ENCODE measurements at regions of chr9 and their contacts with region 1.

Region 1: DNA sequence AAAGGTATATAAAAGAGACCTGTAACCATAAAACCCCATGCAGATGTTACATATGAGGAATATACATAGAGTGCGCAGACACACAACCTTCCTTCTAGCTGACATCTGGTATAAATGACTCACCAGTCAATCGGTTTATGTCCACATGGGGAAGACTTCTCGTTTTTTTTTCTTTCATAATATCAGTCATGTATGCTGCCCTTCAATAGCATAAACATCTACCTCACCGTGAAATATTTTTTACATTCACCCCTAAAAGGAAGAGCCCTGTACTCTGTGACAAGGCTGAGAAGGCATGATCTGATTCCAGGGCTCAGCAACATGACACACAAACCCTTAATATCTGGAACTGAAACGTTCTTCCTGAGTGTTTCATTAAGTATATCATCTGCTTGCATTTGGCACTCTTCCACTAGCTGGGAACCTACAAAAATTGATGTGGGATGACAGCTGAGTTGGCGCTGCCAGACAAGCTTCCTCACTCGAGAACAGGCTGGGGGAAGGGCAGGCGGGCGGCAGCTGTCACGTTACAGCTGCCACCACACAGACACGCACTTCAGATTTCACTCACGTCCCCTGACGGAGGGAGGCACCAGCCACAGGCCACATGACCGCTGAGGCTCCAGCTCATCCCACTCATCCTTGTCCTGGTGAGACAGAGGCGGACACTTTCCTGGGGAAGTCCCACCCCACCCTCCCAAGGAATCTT is 74.2 kb downstream of the SHB start:
- DNase-seq: peak; percentile 87
- H3K4me3 ChIP-seq: peak overlapping the region in 2 of 4 donors; percentile 6 to 17
- H3K27ac ChIP-seq: peak overlapping the region; percentile 64 to 87 (median 76)
- H3K4me1 ChIP-seq: peaks cover 0 to 60% (median 45%) of the 10 kb centered on the region in 4 donors
- H3K27me3 ChIP-seq: no peaks in the 10 kb centered on the region
- CTCF ChIP-seq: no peak
- EP300 ChIP-seq: peak in 2 of 4 donors; percentile 34 to 40
- POLR2A ChIP-seq: no peak

Region 2: DNA sequence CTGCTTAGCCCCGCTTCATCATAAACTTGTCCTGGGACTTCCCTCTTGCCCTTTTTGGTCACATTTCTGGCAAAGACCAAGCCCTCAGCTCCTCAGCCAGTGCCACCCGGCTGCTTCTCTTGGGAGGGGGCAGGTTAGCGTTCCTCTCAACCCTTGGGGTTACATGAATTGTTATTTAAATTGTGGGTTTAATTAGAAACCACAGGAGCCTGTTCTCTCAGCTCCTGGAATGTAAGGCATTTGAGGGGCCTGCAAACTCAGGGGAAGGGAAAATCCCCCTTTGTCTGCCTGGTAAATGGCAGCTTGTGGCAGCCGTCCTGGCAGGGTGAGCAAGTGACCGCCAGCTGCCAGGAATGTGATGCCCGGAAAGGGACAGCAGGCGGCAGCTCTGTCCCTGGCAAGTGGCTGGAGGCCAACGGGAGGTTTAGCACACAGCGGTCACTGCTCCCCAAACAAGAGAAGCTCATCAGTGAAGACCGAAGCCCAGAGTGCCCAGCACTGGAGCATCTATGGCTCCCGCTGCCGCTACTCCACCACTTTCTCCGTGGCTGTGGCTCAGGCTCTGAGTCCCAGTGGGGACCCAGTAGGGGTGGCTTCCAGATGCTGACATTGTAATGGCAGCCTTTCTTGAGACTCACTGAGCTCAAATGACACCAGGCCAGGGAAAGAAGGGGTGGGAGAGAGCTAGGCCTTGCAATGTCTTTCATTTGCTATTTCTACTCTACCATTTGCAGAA is 22.5 kb after region 1 on chr9:
- intact Hi-C with region 1: loop called (anchors 2 kb)
- DNase-seq: no peak
- H3K4me3 ChIP-seq: no peak overlapping the region
- H3K27ac ChIP-seq: peak overlapping the region; percentile 72 to 90 (median 82)
- H3K4me1 ChIP-seq: peaks cover 0 to 68% (median 58%) of the 10 kb centered on the region in 4 donors
- H3K27me3 ChIP-seq: no peaks in the 10 kb centered on the region
- CTCF ChIP-seq: no peak
- EP300 ChIP-seq: no peak
- POLR2A ChIP-seq: no peak

Region 3: GRCh38 chr9:38035873-38036272 is 41.1 kb after region 1 on chr9:
- intact Hi-C with region 1: loop called (anchors 5 kb)
- DNase-seq: no peak
- H3K4me3 ChIP-seq: no peak overlapping the region
- H3K27ac ChIP-seq: peak overlapping the region in 1 of 4 donors; percentile 61
- H3K4me1 ChIP-seq: peaks cover 0 to 60% (median 47%) of the 10 kb centered on the region in 4 donors
- H3K27me3 ChIP-seq: no peaks in the 10 kb centered on the region
- CTCF ChIP-seq: no peak
- EP300 ChIP-seq: no peak
- POLR2A ChIP-seq: no peak